ENCODE measurements at regions of chrX and their contacts with region 1.

Region 1: GRCh38 chrX:69238114-69238886 is 73.0 kb upstream of the PJA1 start:
- DNase-seq: peak; percentile 53 to 95 (median 69)

Region 2: GRCh38 chrX:69285881-69286564 is 47.7 kb after region 1 on chrX:
- intact Hi-C with region 1: loop called (anchors 10 kb)
- DNase-seq: peak in 9 of 10 donors; percentile 32 to 92 (median 60)